Posterior cingulate gyrus (tissue), 11 donors: ENCODE measurements at regions of chr11 and their contacts with region 1.

Region 1: GRCh38 chr11:35822815-35823495 is 120.9 kb upstream of the LDLRAD3 start:
- DNase-seq: no peak

Region 2: GRCh38 chr11:35662649-35663407 is 160.1 kb before region 1 on chr11 and contains the start of gene TRIM44:
- intact Hi-C with region 1: loop called (anchors 5 kb)
- DNase-seq: peak; percentile 75 to 97 (median 85)

Region 3: GRCh38 chr11:35907648-35908431 is 84.9 kb after region 1 on chr11:
- intact Hi-C with region 1: loop called (anchors 10 kb)
- DNase-seq: no peak

Region 4: GRCh38 chr11:35992548-35992947 is 169.6 kb after region 1 on chr11:
- intact Hi-C with region 1: no loop called
- DNase-seq: no peak

Region 5: GRCh38 chr11:36056160-36056751 is 233.3 kb after region 1 on chr11:
- intact Hi-C with region 1: loop called (anchors 10 kb)
- DNase-seq: no peak

Region 6: GRCh38 chr11:36131721-36132397 is 308.9 kb after region 1 on chr11:
- intact Hi-C with region 1: loop called (anchors 5 kb)
- DNase-seq: peak in 9 of 10 donors; percentile 46 to 94 (median 66)

Region 7: GRCh38 chr11:36258730-36259360 is 435.9 kb after region 1 on chr11:
- intact Hi-C with region 1: loop called (anchors 5 kb)
- DNase-seq: peak; percentile 37 to 96 (median 64)